Activated CD4-positive, alpha-beta memory T cell treated with anti-CD3 and anti-CD28 coated beads for 36 hours (primary cell): ENCODE measurements at regions of chr2 and their contacts with region 1.

Region 1: DNA sequence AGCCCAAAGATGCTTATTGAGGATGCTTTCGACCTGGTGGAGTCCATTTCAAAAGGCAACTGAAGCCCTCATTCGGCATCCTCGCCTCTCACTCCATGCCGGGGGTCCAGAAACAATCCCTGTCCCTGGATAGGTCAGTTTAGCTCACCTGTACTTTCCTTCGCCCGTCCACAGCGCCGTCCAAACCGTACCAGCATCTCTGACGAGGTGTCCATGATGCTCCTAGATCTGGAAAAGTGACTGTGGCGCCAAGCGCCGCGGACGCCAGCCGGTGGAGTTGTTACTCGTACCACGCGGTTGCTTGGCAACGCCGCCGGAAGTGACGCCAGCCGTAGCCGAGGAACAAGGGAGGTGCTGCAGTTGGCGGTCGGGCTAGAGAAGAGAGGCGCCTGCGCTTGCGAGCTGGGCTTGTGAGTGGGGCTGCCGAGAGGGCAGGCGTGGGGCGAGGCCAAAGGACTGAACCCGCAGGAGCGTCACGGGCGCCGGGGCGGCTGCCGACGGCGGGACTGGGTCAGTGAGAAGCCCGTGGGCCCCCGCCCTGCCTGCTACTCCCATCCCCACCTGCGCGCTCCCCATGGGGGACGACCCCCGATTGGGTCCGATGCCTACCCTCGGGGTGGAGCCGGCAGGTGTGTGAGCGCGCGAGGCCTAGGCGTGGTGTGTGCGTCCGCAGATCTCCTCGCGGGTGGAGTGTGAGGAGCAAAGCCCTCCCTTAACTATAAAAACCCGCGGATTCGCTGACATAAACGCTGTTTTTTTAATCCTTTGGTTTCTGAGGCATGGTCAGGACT is at the starts of genes CFAP210 and PHOSPHO2:
- DNase-seq: peak; percentile 99
- H3K4me3 Mint-ChIP-seq: peak within 1 kb of the TSS; percentile 90
- H3K27ac Mint-ChIP-seq: peak within 1 kb of the TSS; percentile 68
- H3K4me1 Mint-ChIP-seq: peaks cover 16% of the 10 kb centered on the region
- H3K27me3 Mint-ChIP-seq: peaks cover 6% of the 10 kb centered on the region
- total RNA-seq, gene CFAP210: not detected
- total RNA-seq, gene PHOSPHO2: 2.6 to 3.4 TPM

Region 2: DNA sequence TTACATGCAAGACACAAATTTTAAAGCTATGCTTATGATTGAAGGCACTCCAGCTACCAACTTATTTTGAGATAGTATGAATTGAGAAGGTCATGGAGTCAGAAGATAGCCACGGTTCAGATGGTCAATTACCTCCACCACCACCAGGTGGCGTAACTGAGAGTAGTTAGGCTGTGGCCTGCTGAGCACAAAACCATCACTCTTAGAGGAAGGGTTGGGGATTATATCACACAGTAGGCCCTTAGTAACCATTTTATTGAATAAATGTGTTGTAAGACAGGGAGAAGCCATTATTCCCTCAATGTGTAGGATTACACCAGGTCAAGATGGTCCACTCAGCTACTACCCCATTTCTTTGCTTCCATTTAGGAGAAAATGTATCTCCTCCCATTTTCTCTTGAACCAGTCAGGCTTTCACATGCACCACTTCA is 166.0 kb before region 1 on chr2:
- CTCF ChIA-PET with region 1: interaction called, 6 read pairs
- POLR2A ChIA-PET with region 1: no interaction called
- intact Hi-C with region 1: loop called (anchors 2 kb)
- DNase-seq: peak; percentile 81
- H3K4me3 Mint-ChIP-seq: no peak overlapping the region
- H3K27ac Mint-ChIP-seq: no peak overlapping the region
- H3K4me1 Mint-ChIP-seq: no peaks in the 10 kb centered on the region
- H3K27me3 Mint-ChIP-seq: no peaks in the 10 kb centered on the region

Region 3: DNA sequence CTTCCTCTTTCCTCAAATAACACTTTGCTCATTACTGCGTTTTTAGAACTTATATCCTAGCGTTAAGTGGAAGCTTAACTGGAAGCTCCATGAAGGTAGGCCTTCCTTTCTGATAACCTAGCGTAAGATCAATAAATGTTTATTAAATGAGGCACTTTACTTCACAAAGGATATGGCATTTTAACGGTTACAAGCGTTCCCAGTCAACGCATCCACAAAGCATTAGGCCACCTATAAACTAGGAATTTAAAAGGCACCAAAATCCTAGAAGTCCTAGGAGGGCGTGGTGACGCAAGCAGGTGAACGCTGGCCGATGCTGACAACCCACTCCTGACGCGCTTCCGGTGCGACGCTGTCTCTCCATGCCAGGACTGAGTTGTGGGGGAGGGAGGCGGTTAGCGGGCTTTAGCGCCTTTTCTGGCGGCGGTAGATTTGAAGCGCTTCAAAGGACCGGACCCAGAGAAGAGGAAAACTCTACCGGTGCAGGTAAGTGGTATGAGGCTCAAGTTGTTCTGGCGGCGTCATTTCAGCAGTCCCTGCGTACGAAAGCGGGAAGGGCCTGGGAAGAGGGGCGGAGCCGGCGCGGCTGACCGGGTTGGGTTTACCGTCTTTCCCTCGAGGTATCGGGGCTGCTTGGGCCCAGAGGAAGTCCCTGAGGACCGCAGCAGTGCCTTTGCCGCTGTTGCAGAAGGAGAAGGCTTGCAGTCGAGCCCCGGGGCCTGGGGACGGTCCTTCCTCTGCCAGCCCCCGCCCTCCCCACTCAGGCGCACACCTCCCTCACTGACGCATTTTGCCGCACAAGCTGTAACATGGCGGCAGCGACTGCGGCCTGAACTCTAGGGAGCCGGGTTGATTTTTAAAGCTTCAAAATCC is 110.1 kb before region 1 on chr2 and contains the start of gene PPIG:
- CTCF ChIA-PET with region 1: no interaction called
- POLR2A ChIA-PET with region 1: interaction called, 3 read pairs
- intact Hi-C with region 1: loop called (anchors 1 kb)
- DNase-seq: peak; percentile 93
- H3K4me3 Mint-ChIP-seq: peak within 1 kb of the TSS; percentile 99
- H3K27ac Mint-ChIP-seq: peak within 1 kb of the TSS; percentile 98
- H3K4me1 Mint-ChIP-seq: peaks cover 27% of the 10 kb centered on the region
- H3K27me3 Mint-ChIP-seq: no peaks in the 10 kb centered on the region
- total RNA-seq, gene PPIG: 52.3 to 55.3 TPM

Region 4: DNA sequence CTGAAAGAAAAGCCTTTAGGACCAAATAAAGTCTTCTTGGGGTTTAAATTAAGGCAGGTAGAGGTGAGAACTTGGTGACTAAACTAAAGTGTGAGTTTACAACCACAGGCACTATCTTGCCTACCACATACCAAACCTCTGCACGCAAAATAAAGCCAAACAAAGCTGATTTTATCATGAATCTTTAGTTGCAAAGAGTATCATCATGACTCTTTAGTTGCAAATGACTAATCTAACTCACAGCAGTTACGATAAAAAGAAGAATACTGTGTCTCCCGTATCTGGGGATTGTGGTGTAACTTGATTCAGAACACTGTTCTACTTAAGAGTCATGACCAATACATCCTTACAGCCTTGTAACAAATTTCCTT is 11.3 kb before region 1 on chr2:
- CTCF ChIA-PET with region 1: interaction called, 7 read pairs
- POLR2A ChIA-PET with region 1: interaction called, 9 read pairs
- intact Hi-C with region 1: loop called (anchors 1 kb)
- DNase-seq: peak; percentile 46
- H3K4me3 Mint-ChIP-seq: no peak overlapping the region
- H3K27ac Mint-ChIP-seq: peak overlapping the region; percentile 57
- H3K4me1 Mint-ChIP-seq: peaks cover 13% of the 10 kb centered on the region
- H3K27me3 Mint-ChIP-seq: no peaks in the 10 kb centered on the region

Region 5: GRCh38 chr2:169790581-169790980 is 96.3 kb after region 1 on chr2:
- CTCF ChIA-PET with region 1: no interaction called
- POLR2A ChIA-PET with region 1: no interaction called
- intact Hi-C with region 1: no loop called
- DNase-seq: no peak
- H3K4me3 Mint-ChIP-seq: no peak overlapping the region
- H3K27ac Mint-ChIP-seq: no peak overlapping the region
- H3K4me1 Mint-ChIP-seq: peaks cover 5% of the 10 kb centered on the region
- H3K27me3 Mint-ChIP-seq: peaks cover 23% of the 10 kb centered on the region